HEK293T (cell line): ENCODE measurements at regions of chr19 and their contacts with region 1.

Region 1: DNA sequence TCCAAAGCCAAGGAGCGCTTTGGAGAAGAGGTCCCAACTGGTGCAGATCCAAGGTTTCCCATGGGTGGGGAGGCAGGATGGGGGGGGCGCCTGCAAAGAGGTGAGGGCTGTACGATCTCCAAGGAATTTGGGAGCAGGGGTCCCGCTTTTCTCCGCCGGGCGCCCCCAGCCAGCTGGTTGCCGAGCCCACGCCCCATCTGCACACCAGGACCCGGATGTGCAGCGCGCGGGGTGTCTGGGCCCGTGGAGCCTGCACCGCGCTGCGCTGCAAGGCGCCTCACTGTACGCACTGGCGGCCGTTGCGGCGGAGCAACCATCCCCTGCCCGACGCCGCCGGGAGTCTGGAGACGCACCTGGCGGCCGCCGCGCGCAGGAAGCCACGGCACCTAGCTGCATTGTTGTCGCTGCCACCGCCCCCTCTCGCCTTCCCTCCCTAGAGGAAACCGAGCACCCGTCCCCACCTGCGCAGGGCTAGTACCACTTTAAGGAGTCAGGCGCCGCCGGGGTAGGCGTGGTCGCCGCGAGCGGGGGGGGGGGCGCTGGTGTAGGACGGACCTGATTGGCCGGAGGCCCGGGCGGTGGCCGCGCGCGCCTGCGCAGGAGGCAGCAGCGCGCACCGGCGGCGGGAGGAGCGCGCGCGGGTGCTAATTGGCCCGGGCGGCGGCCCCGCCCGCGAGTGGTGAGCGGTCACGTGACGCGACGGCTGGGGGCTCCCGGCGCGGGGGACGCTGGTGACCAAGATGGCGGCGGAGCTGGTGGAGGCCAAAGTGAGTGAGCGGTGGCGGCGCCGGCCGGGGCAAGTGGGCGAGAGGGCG is at the start of gene PIAS4:
- DNase-seq: peak; percentile 99

Region 2: GRCh38 chr19:3984908-3985642 is 22.2 kb before region 1 on chr19 and contains the start of gene EEF2:
- CTCF ChIA-PET with region 1: no interaction called
- POLR2A ChIA-PET with region 1: interaction called, 13 read pairs
- DNase-seq: peak; percentile 93

Region 3: GRCh38 chr19:3995627-3996026 is 11.6 kb before region 1 on chr19:
- CTCF ChIA-PET with region 1: no interaction called
- POLR2A ChIA-PET with region 1: interaction called, 10 read pairs
- DNase-seq: no peak

Region 4: GRCh38 chr19:4115050-4115817 is 108.0 kb after region 1 on chr19:
- CTCF ChIA-PET with region 1: no interaction called
- POLR2A ChIA-PET with region 1: no interaction called
- DNase-seq: no peak